CD4-positive, alpha-beta memory T cell (primary cell): ENCODE measurements at regions of chr17 and their contacts with region 1.

Region 1: GRCh38 chr17:15502369-15503112 is 35.1 kb upstream of the CDRT4 start:
- DNase-seq: peak in 4 of 5 donors; percentile 27 to 54 (median 39)
- H3K4me3 ChIP-seq: no peak overlapping the region
- H3K4me3 Mint-ChIP-seq: no peak overlapping the region
- H3K27ac ChIP-seq: no peak overlapping the region
- H3K27ac Mint-ChIP-seq: peak overlapping the region in 2 of 7 donors; percentile 33 to 58
- H3K4me1 ChIP-seq: peaks cover 7% of the 10 kb centered on the region
- H3K4me1 Mint-ChIP-seq: peaks cover 6 to 16% (median 9%) of the 10 kb centered on the region in 4 donors
- H3K27me3 ChIP-seq: no peaks in the 10 kb centered on the region
- H3K27me3 Mint-ChIP-seq: no peaks in the 10 kb centered on the region

Region 2: GRCh38 chr17:15257258-15257788 is 245.2 kb before region 1 on chr17:
- CTCF ChIA-PET with region 1: interaction called, 25 read pairs
- POLR2A ChIA-PET with region 1: no interaction called
- intact Hi-C with region 1: loop called (anchors 1 kb)
- DNase-seq: peak; percentile 32 to 50 (median 44)
- H3K4me3 ChIP-seq: no peak overlapping the region
- H3K4me3 Mint-ChIP-seq: peak overlapping the region in 3 of 8 donors; percentile 10 to 68 (median 51)
- H3K27ac ChIP-seq: no peak overlapping the region
- H3K27ac Mint-ChIP-seq: no peak overlapping the region
- H3K4me1 ChIP-seq: peaks cover 21% of the 10 kb centered on the region
- H3K4me1 Mint-ChIP-seq: peaks cover 11 to 25% (median 14%) of the 10 kb centered on the region in 4 donors
- H3K27me3 ChIP-seq: peaks cover 8% of the 10 kb centered on the region
- H3K27me3 Mint-ChIP-seq: peaks cover 42 to 44% of the 10 kb centered on the region in 2 donors